CD14-positive monocyte (primary cell): ENCODE measurements at regions of chr12 and their contacts with region 1.

Region 1: DNA sequence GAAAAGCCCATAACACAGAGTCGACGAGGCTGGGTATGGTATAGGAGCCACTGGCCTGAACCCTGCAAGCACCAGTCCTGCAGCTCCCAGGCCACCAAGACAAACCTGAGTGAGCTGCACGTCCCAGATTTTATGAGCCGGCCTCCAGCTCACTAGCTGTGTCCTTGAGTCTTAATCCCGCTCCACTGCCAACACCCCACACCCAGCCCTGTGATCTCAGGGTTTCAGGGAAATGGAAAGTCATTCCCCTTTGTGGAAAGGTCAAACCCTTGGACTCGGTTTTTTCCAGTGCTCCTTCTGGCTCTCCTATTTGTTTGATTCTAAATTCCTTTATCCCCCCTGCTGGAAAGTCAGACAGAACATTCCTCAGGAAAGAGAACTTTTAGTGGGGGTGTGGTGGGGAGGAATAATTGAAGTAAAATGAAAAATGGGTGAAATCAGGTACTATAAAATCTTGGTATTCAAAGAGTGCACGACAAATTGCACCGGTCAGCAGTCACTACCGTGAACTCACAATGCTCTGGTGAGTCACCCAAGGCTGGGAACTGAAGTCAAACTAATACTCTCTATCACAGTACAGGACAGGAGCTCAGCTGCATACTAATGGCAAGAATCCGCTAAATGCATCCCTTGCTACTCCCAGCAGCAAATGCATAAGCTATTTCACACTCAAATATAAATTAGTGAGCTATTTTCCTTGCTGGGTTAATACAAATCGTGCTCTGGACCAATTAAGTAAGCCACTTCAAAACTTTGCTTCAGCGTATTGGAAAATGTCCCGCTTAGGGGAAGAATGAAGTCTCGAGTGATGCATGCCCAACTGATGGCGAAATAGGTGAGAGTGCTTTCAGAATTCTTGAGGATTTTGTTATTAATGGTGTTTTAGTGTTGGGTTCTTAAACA is 9.0 kb downstream of the PITPNM2 start:
- DNase-seq: no peak
- H3K4me3 ChIP-seq: no peak overlapping the region
- H3K4me3 Mint-ChIP-seq: no peak overlapping the region
- H3K27ac ChIP-seq: no peak overlapping the region
- H3K27ac Mint-ChIP-seq: peak overlapping the region in 2 of 7 donors; percentile 12 to 19
- H3K4me1 ChIP-seq: peaks cover 8 to 10% of the 10 kb centered on the region in 2 donors
- H3K4me1 Mint-ChIP-seq: peaks cover 17% of the 10 kb centered on the region
- H3K27me3 ChIP-seq: no peaks in the 10 kb centered on the region
- H3K27me3 Mint-ChIP-seq: peaks cover 0 to 7% (median 3%) of the 10 kb centered on the region in 3 donors
- CTCF ChIP-seq: no peak

Region 2: GRCh38 chr12:123043536-123044001 is 98.3 kb before region 1 on chr12:
- intact Hi-C with region 1: loop called in 1 of 2 experiments (anchors 10 kb)
- DNase-seq: peak; percentile 35 to 58 (median 50)
- H3K4me3 ChIP-seq: no peak overlapping the region
- H3K4me3 Mint-ChIP-seq: peak overlapping the region in 1 of 2 donors; percentile 17
- H3K27ac ChIP-seq: no peak overlapping the region
- H3K27ac Mint-ChIP-seq: no peak overlapping the region
- H3K4me1 ChIP-seq: peaks cover 6 to 11% of the 10 kb centered on the region in 2 donors
- H3K4me1 Mint-ChIP-seq: peaks cover 33% of the 10 kb centered on the region
- H3K27me3 ChIP-seq: no peaks in the 10 kb centered on the region
- H3K27me3 Mint-ChIP-seq: peaks cover 0 to 6% (median 0%) of the 10 kb centered on the region in 3 donors
- CTCF ChIP-seq: peak; percentile 42